ENCODE measurements at regions of chr19 and their contacts with region 1.

Region 1: GRCh38 chr19:30406220-30407067 is 34.3 kb downstream of the ZNF536 start:
- DNase-seq: peak; percentile 43 to 72 (median 62)
- H3K4me3 ChIP-seq: no peak overlapping the region
- H3K27ac ChIP-seq: no peak overlapping the region
- H3K4me1 ChIP-seq: no peaks in the 10 kb centered on the region
- H3K27me3 ChIP-seq: no peaks in the 10 kb centered on the region
- CTCF ChIP-seq: peak; percentile 31 to 70 (median 58)
- POLR2A ChIP-seq: no peak

Region 2: GRCh38 chr19:30227661-30228428 is 178.6 kb before region 1 on chr19:
- intact Hi-C with region 1: loop called in 1 of 2 experiments (anchors 10 kb)
- DNase-seq: peak; percentile 64 to 75 (median 70)
- H3K4me3 ChIP-seq: peak overlapping the region; percentile 22 to 77 (median 42)
- H3K27ac ChIP-seq: peak overlapping the region in 4 of 5 donors; percentile 51 to 86 (median 64)
- H3K4me1 ChIP-seq: peaks cover 14 to 24% of the 10 kb centered on the region in 2 donors
- H3K27me3 ChIP-seq: peaks cover 1% of the 10 kb centered on the region
- CTCF ChIP-seq: peak in 5 of 6 experiments; percentile 20 to 82 (median 71)
- POLR2A ChIP-seq: peak in 1 of 2 donors; percentile 34

Measured in adrenal gland (tissue), 19 donors.